A673 (cell line): ENCODE measurements at regions of chr15 and their contacts with region 1.

Region 1: GRCh38 chr15:64490598-64491259 is 30.4 kb downstream of the ZNF609 start:
- DNase-seq: no peak
- H3K4me3 ChIP-seq: no peak overlapping the region
- H3K27ac ChIP-seq: no peak overlapping the region
- H3K4me1 ChIP-seq: no peaks in the 10 kb centered on the region
- H3K27me3 ChIP-seq: no peaks in the 10 kb centered on the region
- CTCF ChIP-seq: no peak

Region 2: GRCh38 chr15:64476550-64476949 is 14.2 kb before region 1 on chr15:
- CTCF ChIA-PET with region 1: interaction called, 10 read pairs
- POLR2A ChIA-PET with region 1: no interaction called
- intact Hi-C with region 1: no loop called
- DNase-seq: no peak
- H3K4me3 ChIP-seq: no peak overlapping the region
- H3K27ac ChIP-seq: peak overlapping the region; percentile 42
- H3K4me1 ChIP-seq: no peaks in the 10 kb centered on the region
- H3K27me3 ChIP-seq: no peaks in the 10 kb centered on the region
- CTCF ChIP-seq: no peak